ENCODE measurements at regions of chr3 and their contacts with region 1.

Region 1: GRCh38 chr3:112321867-112322649 is 10.9 kb upstream of the CD200 start:
- DNase-seq: peak; percentile 84 to 89
- H3K4me3 ChIP-seq: peak overlapping the region; percentile 36
- H3K4me3 Mint-ChIP-seq: peak overlapping the region; percentile 78
- H3K27ac Mint-ChIP-seq: peak overlapping the region; percentile 95
- H3K4me1 ChIP-seq: peaks cover 31% of the 10 kb centered on the region
- H3K4me1 Mint-ChIP-seq: peaks cover 44% of the 10 kb centered on the region
- H3K27me3 ChIP-seq: no peaks in the 10 kb centered on the region
- H3K27me3 Mint-ChIP-seq: no peaks in the 10 kb centered on the region
- CTCF ChIP-seq: no peak

Region 2: DNA sequence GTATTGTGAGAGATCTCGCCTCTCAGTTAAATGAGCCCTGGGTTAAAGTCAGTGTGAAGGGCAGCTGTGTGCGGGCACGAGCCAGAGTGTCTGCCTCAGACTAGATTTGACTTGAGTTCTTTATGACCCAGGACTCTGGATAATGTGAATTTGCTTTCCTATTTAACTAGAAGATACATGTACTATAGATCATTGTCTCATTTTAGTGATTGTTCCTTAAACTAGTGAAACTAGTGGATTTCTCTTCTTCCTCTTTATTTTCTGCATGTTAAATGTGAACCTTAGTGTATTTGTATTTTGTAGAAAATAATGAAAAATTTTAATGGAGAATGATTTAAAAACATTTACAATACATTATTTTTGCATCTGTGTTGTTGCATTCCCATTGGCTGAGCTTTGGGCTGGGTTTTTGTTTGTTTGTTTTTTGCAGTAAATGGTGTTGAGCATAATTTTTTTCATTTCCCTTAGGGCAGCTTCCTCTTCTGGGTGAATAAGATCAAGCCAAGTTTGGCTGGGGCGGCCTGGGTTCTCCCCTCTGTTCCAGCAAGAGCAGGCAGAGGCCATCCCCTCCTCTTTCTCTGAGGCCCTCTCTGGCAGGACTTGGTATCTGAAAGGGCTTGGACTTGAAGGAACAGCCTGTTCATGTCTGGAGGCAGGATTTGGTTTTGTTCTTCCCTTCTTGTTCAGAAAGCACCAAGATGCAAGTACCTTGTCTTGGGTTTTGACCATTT is 204.1 kb before region 1 on chr3:
- CTCF ChIA-PET with region 1: no interaction called
- POLR2A ChIA-PET with region 1: no interaction called
- intact Hi-C with region 1: no loop called
- DNase-seq: no peak
- H3K4me3 ChIP-seq: no peak overlapping the region
- H3K4me3 Mint-ChIP-seq: no peak overlapping the region
- H3K27ac Mint-ChIP-seq: no peak overlapping the region
- H3K4me1 ChIP-seq: peaks cover 7% of the 10 kb centered on the region; the same call in 1 of the 2 replicates
- H3K4me1 Mint-ChIP-seq: peaks cover 7% of the 10 kb centered on the region
- H3K27me3 ChIP-seq: no peaks in the 10 kb centered on the region
- H3K27me3 Mint-ChIP-seq: no peaks in the 10 kb centered on the region
- CTCF ChIP-seq: no peak

Region 3: GRCh38 chr3:112273536-112273935 is 48.5 kb before region 1 on chr3:
- CTCF ChIA-PET with region 1: no interaction called
- POLR2A ChIA-PET with region 1: no interaction called
- intact Hi-C with region 1: no loop called
- DNase-seq: no peak
- H3K4me3 ChIP-seq: no peak overlapping the region
- H3K4me3 Mint-ChIP-seq: no peak overlapping the region
- H3K27ac Mint-ChIP-seq: no peak overlapping the region
- H3K4me1 ChIP-seq: no peaks in the 10 kb centered on the region
- H3K4me1 Mint-ChIP-seq: no peaks in the 10 kb centered on the region
- H3K27me3 ChIP-seq: no peaks in the 10 kb centered on the region
- H3K27me3 Mint-ChIP-seq: no peaks in the 10 kb centered on the region
- CTCF ChIP-seq: no peak

Region 4: DNA sequence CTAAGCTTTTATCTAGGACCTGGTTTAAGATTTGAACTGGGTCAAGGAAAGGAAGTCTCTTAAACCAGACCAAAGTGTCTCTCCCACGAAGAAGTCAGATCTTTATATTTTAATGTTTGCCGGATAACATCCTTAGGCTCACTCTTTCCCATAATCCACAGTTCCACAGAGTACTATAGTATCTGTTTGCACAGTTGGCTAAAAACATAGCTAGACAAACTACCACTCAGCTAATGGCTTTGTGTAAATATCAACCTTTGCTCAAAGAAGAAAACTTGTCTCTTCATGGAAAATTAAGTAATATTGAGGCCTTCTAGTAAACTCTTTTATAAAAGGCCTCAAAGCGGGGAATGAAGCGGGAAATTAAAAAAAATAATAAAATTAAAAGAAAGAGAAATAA is 14.5 kb before region 1 on chr3:
- CTCF ChIA-PET with region 1: interaction called, 5 read pairs
- POLR2A ChIA-PET with region 1: interaction called, 7 read pairs
- intact Hi-C with region 1: loop called (anchors 1 kb)
- DNase-seq: no peak
- H3K4me3 ChIP-seq: no peak overlapping the region
- H3K4me3 Mint-ChIP-seq: no peak overlapping the region
- H3K27ac Mint-ChIP-seq: peak overlapping the region; percentile 26
- H3K4me1 ChIP-seq: peaks cover 10% of the 10 kb centered on the region
- H3K4me1 Mint-ChIP-seq: peaks cover 16% of the 10 kb centered on the region
- H3K27me3 ChIP-seq: no peaks in the 10 kb centered on the region
- H3K27me3 Mint-ChIP-seq: no peaks in the 10 kb centered on the region
- CTCF ChIP-seq: no peak

Region 5: DNA sequence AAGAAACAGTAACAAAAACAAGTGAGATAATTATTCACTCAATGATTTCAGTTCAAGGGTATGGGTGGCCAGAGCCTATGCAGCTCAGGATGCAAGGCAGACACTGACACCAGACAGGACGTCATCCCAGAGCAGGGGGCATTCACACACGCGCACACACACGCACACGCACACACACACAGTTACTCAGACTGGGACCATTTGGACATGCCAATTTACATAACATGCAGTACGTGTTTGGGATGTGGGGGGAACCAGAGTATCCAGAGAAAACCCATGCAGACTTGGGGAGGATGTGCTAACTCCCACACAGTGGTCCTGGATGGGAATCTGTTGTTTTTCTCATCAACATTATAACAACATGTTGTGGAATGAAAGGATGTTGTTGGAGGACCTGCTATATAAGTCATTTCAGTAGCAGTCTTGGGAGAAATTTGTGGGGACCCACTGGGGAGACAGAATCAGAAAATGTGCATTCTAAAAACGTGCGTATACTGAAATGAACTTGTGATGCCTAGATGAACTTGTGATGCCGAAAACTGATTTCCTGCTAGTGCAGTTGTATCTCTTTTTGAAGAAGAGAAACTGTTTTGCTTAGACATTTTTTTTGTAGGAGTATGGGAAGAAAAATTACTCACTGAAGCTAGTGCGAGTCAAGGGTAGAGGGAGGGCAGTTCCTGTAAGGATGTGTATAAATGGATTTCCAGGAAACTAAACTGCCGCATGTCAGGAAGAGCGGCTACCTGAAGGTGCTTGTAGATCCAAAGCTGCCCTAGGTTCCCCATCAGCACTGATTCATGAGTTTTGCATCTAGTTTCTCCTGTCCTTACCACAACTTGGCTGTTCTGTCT is 36.1 kb after region 1 on chr3:
- CTCF ChIA-PET with region 1: no interaction called
- POLR2A ChIA-PET with region 1: no interaction called
- intact Hi-C with region 1: no loop called
- DNase-seq: no peak
- H3K4me3 ChIP-seq: no peak overlapping the region
- H3K4me3 Mint-ChIP-seq: no peak overlapping the region
- H3K27ac Mint-ChIP-seq: no peak overlapping the region
- H3K4me1 ChIP-seq: no peaks in the 10 kb centered on the region
- H3K4me1 Mint-ChIP-seq: no peaks in the 10 kb centered on the region
- H3K27me3 ChIP-seq: no peaks in the 10 kb centered on the region
- H3K27me3 Mint-ChIP-seq: no peaks in the 10 kb centered on the region
- CTCF ChIP-seq: no peak

Region 6: GRCh38 chr3:112407888-112408702 is 86.0 kb after region 1 on chr3:
- CTCF ChIA-PET with region 1: interaction called, 3 read pairs
- POLR2A ChIA-PET with region 1: no interaction called
- intact Hi-C with region 1: loop called (anchors 2 kb)
- DNase-seq: no peak
- H3K4me3 ChIP-seq: no peak overlapping the region
- H3K4me3 Mint-ChIP-seq: peak overlapping the region; percentile 43
- H3K27ac Mint-ChIP-seq: peak overlapping the region; percentile 45
- H3K4me1 ChIP-seq: peaks cover 30% of the 10 kb centered on the region
- H3K4me1 Mint-ChIP-seq: peaks cover 30% of the 10 kb centered on the region
- H3K27me3 ChIP-seq: no peaks in the 10 kb centered on the region
- H3K27me3 Mint-ChIP-seq: no peaks in the 10 kb centered on the region
- CTCF ChIP-seq: no peak

Measured in Caco-2 (cell line).